ENCODE measurements at regions of chr6 and their contacts with region 1.

Region 1: GRCh38 chr6:110849781-110850180 is 24.8 kb upstream of the AMD1 start:
- DNase-seq: peak in 1 of 2 donors; percentile 29
- H3K4me3 ChIP-seq: no peak overlapping the region
- CTCF ChIP-seq: no peak
- POLR2A ChIP-seq: no peak

Region 2: DNA sequence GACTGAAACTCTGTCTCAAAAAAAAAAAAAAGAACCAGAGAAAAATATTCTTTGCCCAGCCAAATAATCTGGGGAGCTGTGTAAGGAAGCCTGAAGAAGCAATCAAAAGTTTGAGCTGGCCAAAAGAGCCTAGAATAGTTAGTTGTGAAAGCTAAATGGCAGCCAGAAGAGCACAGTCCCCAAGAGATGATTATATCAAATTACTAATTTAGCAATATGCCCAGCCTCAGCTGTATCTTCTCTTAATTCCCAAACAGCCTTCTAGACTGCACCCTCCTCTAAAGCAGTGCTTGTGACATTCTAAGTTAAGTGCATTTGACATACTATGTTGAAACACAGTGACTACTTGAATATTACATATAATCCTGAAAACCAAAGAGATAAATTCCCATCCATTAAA is 73.4 kb before region 1 on chr6:
- intact Hi-C with region 1: no loop called
- DNase-seq: no peak
- H3K4me3 ChIP-seq: no peak overlapping the region
- CTCF ChIP-seq: no peak
- POLR2A ChIP-seq: no peak

Region 3: GRCh38 chr6:110828396-110828795 is 21.4 kb before region 1 on chr6:
- intact Hi-C with region 1: loop called (anchors 1 kb)
- DNase-seq: no peak
- H3K4me3 ChIP-seq: no peak overlapping the region
- CTCF ChIP-seq: no peak
- POLR2A ChIP-seq: no peak

Region 4: DNA sequence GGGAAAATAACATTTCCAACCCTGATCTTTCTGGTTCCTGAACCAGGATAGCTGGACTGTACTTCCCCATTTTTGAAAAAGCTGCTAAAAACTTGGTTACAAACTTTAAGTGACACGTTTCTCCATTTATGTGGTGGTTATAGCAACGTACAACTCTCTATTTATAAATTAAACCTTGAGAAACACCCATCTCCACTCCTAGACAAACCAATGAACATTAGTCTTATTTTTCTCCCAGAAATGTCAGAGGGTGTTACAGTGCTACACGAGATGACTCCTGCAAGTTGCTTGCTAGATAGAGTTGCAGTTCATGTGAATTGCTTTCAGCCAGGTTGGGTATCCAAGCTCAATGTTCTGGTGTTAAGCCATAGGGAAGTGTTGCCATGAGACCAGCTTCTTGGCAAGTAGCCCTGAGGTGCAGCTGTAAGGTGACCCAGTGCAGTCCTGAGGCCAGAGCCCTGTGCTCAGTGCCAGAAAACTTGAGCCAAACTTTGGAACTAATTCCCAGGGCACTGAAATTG is 684.5 kb after region 1 on chr6:
- intact Hi-C with region 1: no loop called
- DNase-seq: no peak
- H3K4me3 ChIP-seq: no peak overlapping the region
- CTCF ChIP-seq: no peak
- POLR2A ChIP-seq: no peak